Tibial artery (tissue), 4 donors: ENCODE measurements at regions of chr14 and their contacts with region 1.

Region 1: DNA sequence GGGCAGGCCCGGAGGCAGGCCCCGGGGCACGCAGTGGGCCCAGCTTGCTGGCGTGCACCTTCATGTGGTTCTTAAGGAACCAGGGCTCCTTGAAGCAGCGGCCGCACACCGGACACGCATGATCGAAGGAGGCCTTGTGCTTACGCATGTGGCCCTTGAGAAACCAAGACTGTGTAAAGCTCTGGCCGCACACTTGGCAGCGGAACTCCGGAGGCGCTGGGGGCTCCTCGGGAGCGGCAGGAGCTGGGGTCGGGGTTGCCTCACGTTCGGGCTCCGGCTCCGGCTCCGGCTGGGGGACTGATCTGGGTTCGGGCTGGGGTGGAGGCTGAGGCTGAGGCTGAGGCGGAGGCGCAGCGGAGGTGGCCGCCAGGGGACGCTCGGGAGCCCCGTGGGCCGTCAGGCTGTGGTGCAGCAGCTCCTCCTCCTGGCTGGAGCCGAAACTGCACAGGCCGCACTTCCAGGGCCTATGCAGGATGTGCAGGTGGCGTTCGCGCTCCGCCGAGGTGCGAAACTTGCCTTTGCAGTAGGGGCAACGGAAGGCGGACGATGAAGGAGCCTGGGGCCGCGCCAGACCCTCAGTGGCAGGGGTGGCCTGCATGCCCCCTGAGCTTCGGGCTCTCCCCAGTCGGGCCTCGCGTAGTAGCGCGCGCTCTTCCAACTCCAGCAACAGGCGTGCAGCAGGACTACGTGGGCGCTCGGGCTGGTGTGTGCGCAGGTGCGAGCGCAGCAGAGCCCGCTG is 6.0 kb downstream of the ZNF219 start:
- DNase-seq: peak; percentile 77 to 89
- H3K4me3 ChIP-seq: no peak overlapping the region
- H3K27ac ChIP-seq: peak overlapping the region; percentile 29 to 47
- H3K4me1 ChIP-seq: peaks cover 0 to 26% (median 20%) of the 10 kb centered on the region in 4 donors
- H3K27me3 ChIP-seq: no peaks in the 10 kb centered on the region
- CTCF ChIP-seq: peak; percentile 100

Region 2: DNA sequence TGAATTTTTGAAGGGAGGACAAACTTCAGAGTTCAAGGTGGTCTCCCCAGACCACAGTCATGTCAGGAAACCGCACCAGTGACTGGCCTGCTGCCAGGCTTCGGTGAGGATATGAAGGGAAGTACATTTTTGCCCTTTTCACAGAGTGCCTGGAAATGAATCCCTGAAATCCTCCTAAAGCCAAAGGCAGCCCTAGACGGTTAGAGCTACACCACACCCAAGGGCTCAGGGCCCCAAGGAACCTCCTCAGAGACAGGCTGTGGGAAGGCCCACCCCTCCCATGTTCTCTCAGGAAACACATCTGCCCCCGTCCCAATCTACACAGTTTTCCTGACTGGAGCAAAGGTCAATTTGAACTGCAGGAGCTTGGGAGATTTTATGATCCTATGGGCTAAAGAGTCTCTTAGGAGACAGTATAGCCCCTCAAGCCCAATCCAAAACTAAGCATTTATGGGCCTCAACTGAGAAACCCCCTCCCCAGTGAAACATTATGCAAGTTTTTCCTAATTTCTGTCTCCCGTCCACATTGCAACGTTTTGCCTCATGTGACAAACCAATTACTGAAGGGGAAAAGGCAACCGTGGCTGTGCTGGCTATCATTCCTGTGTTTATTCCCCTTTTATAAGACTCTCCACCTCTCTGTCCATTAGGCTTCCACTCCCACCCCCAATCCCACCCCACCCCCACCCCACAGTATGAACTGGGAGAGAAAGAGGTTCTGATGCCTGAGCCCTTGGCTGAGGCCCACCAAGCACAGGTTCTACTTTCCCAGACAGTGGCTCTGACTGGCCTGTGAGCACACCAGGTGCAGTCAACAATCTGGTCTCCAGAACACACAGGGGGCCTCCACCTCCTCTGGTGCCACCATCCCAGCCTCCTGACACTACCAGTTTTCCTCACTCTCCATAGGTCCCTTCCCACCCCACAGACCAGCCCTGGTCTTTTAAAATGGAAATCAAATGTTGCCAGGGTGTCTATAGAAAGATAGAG is 280.2 kb before region 1 on chr14:
- intact Hi-C with region 1: no loop called
- DNase-seq: no peak
- H3K4me3 ChIP-seq: no peak overlapping the region
- H3K27ac ChIP-seq: no peak overlapping the region
- H3K4me1 ChIP-seq: no peaks in the 10 kb centered on the region
- H3K27me3 ChIP-seq: no peaks in the 10 kb centered on the region
- CTCF ChIP-seq: no peak

Region 3: GRCh38 chr14:20989572-20990551 is 102.6 kb before region 1 on chr14 and contains the start of gene METTL17:
- intact Hi-C with region 1: no loop called
- DNase-seq: peak; percentile 94 to 96
- H3K4me3 ChIP-seq: peak within 1 kb of the TSS; percentile 72 to 96
- H3K27ac ChIP-seq: peak within 1 kb of the TSS; percentile 84 to 89
- H3K4me1 ChIP-seq: peaks cover 0 to 53% (median 45%) of the 10 kb centered on the region in 4 donors
- H3K27me3 ChIP-seq: no peaks in the 10 kb centered on the region
- CTCF ChIP-seq: peak; percentile 6 to 18

Region 4: DNA sequence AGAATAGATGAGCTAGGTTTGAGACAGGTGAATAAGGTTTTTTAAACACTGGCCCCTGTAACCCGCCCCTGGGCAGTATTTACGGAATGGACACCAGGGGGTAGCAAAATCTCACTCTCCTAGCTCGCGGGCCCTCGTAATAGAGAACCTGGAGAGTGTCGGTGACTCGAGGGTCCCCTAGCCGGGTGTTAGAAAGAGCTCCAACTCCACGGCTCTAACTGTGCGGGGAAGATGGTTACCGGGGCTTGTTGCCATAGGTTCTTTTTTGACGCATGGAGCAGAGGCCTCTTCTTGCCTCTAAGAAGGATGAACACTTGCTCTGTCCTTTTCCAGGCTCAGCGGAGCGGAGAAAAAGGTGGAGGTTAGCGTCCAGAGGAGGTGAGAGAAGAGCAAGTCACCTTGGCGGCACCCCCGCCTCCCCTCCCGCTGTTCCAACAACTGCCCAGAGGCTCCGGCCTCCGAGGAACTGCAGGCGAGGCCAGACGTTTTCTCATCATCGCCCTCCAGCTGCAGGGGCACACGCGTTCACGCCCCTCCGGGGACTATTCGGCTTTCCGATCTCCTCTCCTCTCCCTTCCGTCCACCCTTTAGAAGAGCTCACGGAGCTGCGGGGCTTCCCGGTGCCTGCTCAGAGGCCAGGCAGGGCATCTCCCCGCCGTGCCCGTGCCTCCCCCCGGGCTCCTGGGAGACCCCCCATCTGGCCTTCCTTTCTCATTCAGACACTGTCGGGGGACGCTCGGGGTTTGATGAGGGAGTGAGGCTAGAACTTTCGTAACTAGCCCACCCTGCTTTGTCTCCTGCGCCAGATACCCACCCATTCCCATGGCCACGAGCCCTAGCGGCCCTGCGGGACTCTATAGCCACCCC is 23.7 kb before region 1 on chr14:
- intact Hi-C with region 1: loop called (anchors 2 kb)
- DNase-seq: peak; percentile 70 to 77
- H3K4me3 ChIP-seq: peak overlapping the region; percentile 76 to 77
- H3K27ac ChIP-seq: peak overlapping the region; percentile 86 to 92
- H3K4me1 ChIP-seq: peaks cover 0 to 40% (median 28%) of the 10 kb centered on the region in 4 donors
- H3K27me3 ChIP-seq: no peaks in the 10 kb centered on the region
- CTCF ChIP-seq: peak; percentile 70 to 78

Region 5: GRCh38 chr14:21203470-21204166 is 111.2 kb after region 1 on chr14:
- intact Hi-C with region 1: no loop called
- DNase-seq: no peak
- H3K4me3 ChIP-seq: no peak overlapping the region
- H3K27ac ChIP-seq: no peak overlapping the region
- H3K4me1 ChIP-seq: no peaks in the 10 kb centered on the region
- H3K27me3 ChIP-seq: no peaks in the 10 kb centered on the region
- CTCF ChIP-seq: no peak

Region 6: GRCh38 chr14:21367582-21368144 is 275.2 kb after region 1 on chr14:
- intact Hi-C with region 1: no loop called
- DNase-seq: no peak
- H3K4me3 ChIP-seq: no peak overlapping the region
- H3K27ac ChIP-seq: no peak overlapping the region
- H3K4me1 ChIP-seq: no peaks in the 10 kb centered on the region
- H3K27me3 ChIP-seq: no peaks in the 10 kb centered on the region
- CTCF ChIP-seq: no peak